K562 (cell line): ENCODE measurements at regions of chr17 and their contacts with region 1.

Region 1: GRCh38 chr17:35969558-35970380 is 11.5 kb downstream of the CCL16 start:
- DNase-seq: peak; percentile 60 to 84 (median 70)
- ATAC-seq: peak; percentile 92
- H3K4me3 ChIP-seq: no peak overlapping the region
- H3K27ac ChIP-seq: no peak overlapping the region
- H3K4me1 ChIP-seq: no peaks in the 10 kb centered on the region
- H3K27me3 ChIP-seq: peaks cover 10 to 12% of the 10 kb centered on the region in 2 experiments; a peak in 4 of 5 replicates
- CTCF ChIP-seq: peak; percentile 81 to 95 (median 86)
- EP300 ChIP-seq: no peak
- POLR2A ChIP-seq: no peak
- RAD21 ChIP-seq: peak; percentile 74 to 86

Region 2: GRCh38 chr17:35947156-35947585 is 22.6 kb before region 1 on chr17:
- CTCF ChIA-PET with region 1: no interaction called
- POLR2A ChIA-PET with region 1: interaction called, 4 read pairs
- in situ Hi-C with region 1: no loop called
- intact Hi-C with region 1: loop called (anchors 2 kb)
- DNase-seq: peak; percentile 49 to 80 (median 53)
- ATAC-seq: peak; percentile 89
- H3K4me3 ChIP-seq: no peak overlapping the region
- H3K27ac ChIP-seq: no peak overlapping the region
- H3K4me1 ChIP-seq: peaks cover 7 to 14% of the 10 kb centered on the region in 2 experiments; a peak in 3 of 5 replicates
- H3K27me3 ChIP-seq: no peaks in the 10 kb centered on the region
- CTCF ChIP-seq: peak; percentile 83 to 89 (median 88)
- EP300 ChIP-seq: no peak
- POLR2A ChIP-seq: no peak
- RAD21 ChIP-seq: peak; percentile 50 to 75

Region 3: DNA sequence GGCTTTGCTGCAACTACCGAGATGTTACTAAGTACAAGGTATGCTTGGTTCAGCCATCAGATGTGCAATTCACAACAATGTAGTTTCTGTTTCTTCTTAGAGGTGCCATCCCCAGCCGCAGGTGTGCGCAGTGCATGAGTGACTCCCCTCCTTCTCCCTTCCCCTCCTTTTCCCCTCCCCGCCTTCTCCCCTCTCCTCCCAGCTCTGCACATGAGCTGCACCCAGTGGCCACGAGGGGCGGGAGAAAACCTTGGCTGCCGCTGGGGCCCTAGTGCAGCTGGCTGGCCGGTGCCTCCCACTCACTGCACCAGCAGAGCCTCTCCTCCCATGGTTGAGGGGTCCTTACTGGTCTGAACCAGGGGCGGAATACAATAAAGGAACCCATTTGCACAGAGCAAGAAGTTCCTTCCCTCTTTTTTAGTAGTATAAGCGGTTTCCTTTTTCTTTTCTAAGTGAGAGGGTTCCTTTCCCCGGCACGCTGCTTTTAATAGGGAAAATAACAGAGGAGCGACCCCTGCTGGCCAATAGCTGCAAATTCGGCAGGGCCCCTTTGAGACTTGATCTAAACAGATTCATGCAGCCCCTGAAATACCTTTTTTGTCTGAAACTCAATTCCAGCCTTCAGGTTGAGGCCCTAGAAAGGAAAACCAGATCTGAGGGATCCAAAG is 39.4 kb after region 1 on chr17:
- CTCF ChIA-PET with region 1: interaction called, 8 read pairs
- POLR2A ChIA-PET with region 1: no interaction called
- in situ Hi-C with region 1: no loop called
- intact Hi-C with region 1: loop called (anchors 5 kb)
- DNase-seq: peak; percentile 57 to 77 (median 70)
- ATAC-seq: peak; percentile 100
- H3K4me3 ChIP-seq: no peak overlapping the region
- H3K27ac ChIP-seq: no peak overlapping the region
- H3K4me1 ChIP-seq: peaks cover 0 to 4% of the 10 kb centered on the region in 2 experiments; a peak in 2 of 5 replicates
- H3K27me3 ChIP-seq: peaks cover 3 to 22% of the 10 kb centered on the region in 2 experiments; a peak in 3 of 5 replicates
- CTCF ChIP-seq: peak; percentile 64 to 83 (median 72)
- EP300 ChIP-seq: no peak
- POLR2A ChIP-seq: no peak
- RAD21 ChIP-seq: peak in 1 of 2 experiments; percentile 60; a peak in 2 of 4 replicates

Region 4: DNA sequence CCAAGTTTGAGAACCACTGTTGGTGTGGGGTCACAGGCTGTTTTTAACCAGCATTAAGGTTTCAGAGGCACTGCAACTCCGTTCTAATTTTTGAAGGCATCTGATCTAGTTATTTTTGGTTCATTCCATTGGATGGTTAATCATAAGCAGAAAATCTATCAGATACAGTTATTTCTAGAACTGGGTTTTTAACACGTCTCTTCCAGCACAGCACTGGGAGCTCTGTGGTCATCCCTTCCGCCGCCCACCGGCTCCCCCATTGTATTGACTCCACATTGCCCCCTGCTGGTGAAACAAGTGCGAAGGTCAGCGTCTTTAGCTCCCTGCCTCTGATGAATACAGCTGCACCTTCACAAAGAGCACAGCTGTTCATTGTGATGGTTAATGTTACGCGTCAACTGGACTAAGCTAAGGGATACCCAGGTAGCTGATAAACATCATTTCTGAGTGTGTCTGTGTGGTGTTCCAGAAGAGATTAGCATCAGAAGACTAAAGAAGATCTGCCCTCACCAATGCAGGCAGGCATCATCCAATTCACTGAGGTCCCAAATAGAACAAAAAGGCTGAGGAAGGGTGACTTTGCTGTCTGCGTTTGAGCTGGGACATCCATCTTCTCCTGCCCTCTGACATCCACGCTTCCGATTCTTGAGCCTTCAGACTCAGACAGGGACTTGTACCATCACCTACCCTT is 102.8 kb after region 1 on chr17:
- CTCF ChIA-PET with region 1: interaction called, 7 read pairs
- POLR2A ChIA-PET with region 1: no interaction called
- in situ Hi-C with region 1: no loop called
- intact Hi-C with region 1: loop called (anchors 5 kb)
- DNase-seq: peak; percentile 78 to 80 (median 78)
- ATAC-seq: peak; percentile 91
- H3K4me3 ChIP-seq: no peak overlapping the region
- H3K27ac ChIP-seq: no peak overlapping the region
- H3K4me1 ChIP-seq: no peaks in the 10 kb centered on the region; a peak in 1 of 5 replicates
- H3K27me3 ChIP-seq: peaks cover 2 to 14% of the 10 kb centered on the region in 2 experiments; a peak in 4 of 5 replicates
- CTCF ChIP-seq: peak; percentile 73 to 87 (median 82)
- EP300 ChIP-seq: no peak
- POLR2A ChIP-seq: no peak
- RAD21 ChIP-seq: peak in 1 of 2 experiments; percentile 62; a peak in 2 of 4 replicates

Region 5: DNA sequence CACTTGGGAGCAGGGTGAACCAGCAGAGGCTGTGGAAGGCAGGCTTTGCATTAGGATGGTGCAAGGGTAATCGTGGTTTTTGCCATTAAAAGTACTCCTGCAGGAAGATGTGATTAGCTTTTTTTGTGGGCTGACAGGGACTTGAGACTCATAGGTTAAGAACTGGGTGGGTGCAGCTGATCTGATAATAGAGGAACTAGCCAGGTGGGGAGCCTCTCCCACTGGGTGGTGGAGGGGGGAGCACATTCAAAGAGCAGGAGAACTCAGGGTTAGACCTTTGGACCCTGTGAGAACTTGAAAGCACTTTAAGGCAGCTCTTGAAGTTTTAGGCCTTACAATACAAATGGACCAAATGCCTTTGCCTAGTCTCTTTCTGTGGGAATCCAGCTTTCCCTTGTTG is 166.3 kb after region 1 on chr17:
- CTCF ChIA-PET with region 1: no interaction called
- POLR2A ChIA-PET with region 1: no interaction called
- in situ Hi-C with region 1: loop called (anchors 5 kb)
- intact Hi-C with region 1: no loop called
- DNase-seq: no peak
- ATAC-seq: no peak
- H3K4me3 ChIP-seq: no peak overlapping the region
- H3K27ac ChIP-seq: no peak overlapping the region
- H3K4me1 ChIP-seq: no peaks in the 10 kb centered on the region
- H3K27me3 ChIP-seq: no peaks in the 10 kb centered on the region; a peak in 1 of 5 replicates
- CTCF ChIP-seq: no peak
- EP300 ChIP-seq: no peak
- POLR2A ChIP-seq: no peak
- RAD21 ChIP-seq: no peak

Region 6: DNA sequence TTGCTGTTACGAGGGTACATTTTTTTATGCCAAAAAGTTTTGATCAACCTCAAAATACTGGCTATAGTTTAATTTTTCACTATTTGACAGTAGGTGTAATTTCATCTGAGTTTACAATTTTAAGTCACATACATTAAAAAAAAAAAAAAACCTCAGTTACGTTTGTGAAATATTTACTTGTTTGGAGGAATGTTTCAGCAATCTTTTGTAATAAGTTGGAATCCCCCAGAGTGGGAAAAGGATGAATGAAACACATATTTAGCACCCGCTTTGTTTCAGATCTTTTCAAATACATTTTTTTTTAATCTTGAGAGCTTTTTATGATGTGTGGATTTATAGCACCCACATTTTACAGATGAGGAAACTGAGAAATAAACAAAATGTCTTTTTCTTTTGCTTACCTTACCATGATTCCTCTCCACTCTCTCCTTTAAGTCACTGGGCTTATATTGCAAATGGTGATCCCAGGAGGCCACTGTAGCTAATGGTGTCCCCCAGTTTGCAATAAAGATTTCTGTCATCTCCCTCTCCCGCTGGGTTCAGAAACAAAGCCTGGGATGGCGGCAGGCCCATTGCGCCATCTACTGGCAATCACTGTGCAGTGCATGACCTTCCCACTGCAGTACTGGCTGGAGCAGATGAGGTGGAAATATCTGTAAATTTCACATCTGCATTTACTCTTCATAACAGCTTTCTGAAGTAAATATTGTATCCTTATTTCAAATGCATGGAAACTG is 179.0 kb after region 1 on chr17:
- CTCF ChIA-PET with region 1: interaction called, 14 read pairs
- POLR2A ChIA-PET with region 1: no interaction called
- in situ Hi-C with region 1: no loop called
- intact Hi-C with region 1: loop called (anchors 1 kb)
- DNase-seq: peak; percentile 70 to 86 (median 85)
- ATAC-seq: peak; percentile 98
- H3K4me3 ChIP-seq: no peak overlapping the region
- H3K27ac ChIP-seq: no peak overlapping the region
- H3K4me1 ChIP-seq: peaks cover 3 to 5% of the 10 kb centered on the region in 2 experiments; a peak in 2 of 5 replicates
- H3K27me3 ChIP-seq: peaks cover 2 to 10% of the 10 kb centered on the region in 2 experiments; a peak in 2 of 5 replicates
- CTCF ChIP-seq: peak; percentile 93 to 97 (median 97)
- EP300 ChIP-seq: no peak
- POLR2A ChIP-seq: no peak
- RAD21 ChIP-seq: peak; percentile 78 to 88

Region 7: GRCh38 chr17:36486204-36487194 is 516.7 kb after region 1 on chr17 and contains the start of gene ZNHIT3:
- CTCF ChIA-PET with region 1: interaction called, 8 read pairs
- POLR2A ChIA-PET with region 1: no interaction called
- in situ Hi-C with region 1: loop called (anchors 25 kb)
- intact Hi-C with region 1: no loop called
- DNase-seq: peak; percentile 91 to 97 (median 94)
- ATAC-seq: peak; percentile 95
- H3K4me3 ChIP-seq: peak within 1 kb of the TSS; percentile 85
- H3K27ac ChIP-seq: peak within 1 kb of the TSS; percentile 64
- H3K4me1 ChIP-seq: peaks cover 14 to 27% of the 10 kb centered on the region in 2 experiments; a peak in 4 of 5 replicates
- H3K27me3 ChIP-seq: no peaks in the 10 kb centered on the region; a peak in 1 of 5 replicates
- CTCF ChIP-seq: no peak
- EP300 ChIP-seq: no peak
- POLR2A ChIP-seq: peak; percentile 82
- RAD21 ChIP-seq: no peak
- polyA plus RNA-seq, gene ZNHIT3: 270 to 300 TPM